Transverse colon (tissue), 4 donors: ENCODE measurements at regions of chr6 and their contacts with region 1.

Region 1: GRCh38 chr6:138001750-138002349 is 105.4 kb downstream of the PERP start:
- DNase-seq: peak; percentile 74
- H3K4me3 ChIP-seq: no peak overlapping the region
- H3K27ac ChIP-seq: no peak overlapping the region
- H3K4me1 ChIP-seq: peaks cover 0 to 3% (median 0%) of the 10 kb centered on the region in 4 donors
- H3K27me3 ChIP-seq: no peaks in the 10 kb centered on the region
- CTCF ChIP-seq: peak; percentile 83 to 93 (median 88)
- EP300 ChIP-seq: no peak
- POLR2A ChIP-seq: no peak

Region 2: DNA sequence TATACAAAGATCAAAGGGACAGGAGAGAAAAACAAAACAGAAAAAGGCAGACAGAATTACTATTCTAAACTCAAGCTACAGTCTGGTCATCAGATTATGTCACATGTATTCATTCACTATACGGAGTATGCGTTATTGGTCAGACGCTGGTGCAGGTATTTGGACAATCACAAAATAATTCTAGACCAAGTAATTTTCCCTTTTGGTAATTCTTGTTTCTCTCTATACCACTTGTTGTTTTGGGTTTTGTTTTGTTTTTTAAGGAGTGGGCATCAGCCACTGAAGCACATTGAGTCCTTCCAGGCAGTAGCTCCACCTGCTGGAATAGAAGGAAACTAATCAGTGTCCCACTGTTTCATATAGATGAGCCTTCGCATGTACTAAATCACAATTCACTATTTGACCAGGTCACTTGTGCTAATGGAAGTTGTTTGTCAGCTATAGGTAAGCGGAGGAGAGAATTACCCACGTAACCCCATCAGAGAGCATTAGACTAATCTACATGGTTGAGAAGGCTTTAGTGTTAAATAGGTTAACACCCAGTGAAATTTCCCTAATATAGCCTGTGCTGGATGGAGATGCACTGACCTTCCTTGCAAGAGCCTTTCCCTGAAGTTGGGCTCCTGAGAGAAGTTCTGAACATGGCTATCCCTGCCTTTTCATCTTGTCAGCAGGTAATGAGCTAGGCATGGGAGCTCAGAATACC is 56.9 kb before region 1 on chr6:
- in situ Hi-C with region 1: no loop called
- intact Hi-C with region 1: no loop called
- DNase-seq: no peak
- H3K4me3 ChIP-seq: no peak overlapping the region
- H3K27ac ChIP-seq: no peak overlapping the region
- H3K4me1 ChIP-seq: no peaks in the 10 kb centered on the region
- H3K27me3 ChIP-seq: no peaks in the 10 kb centered on the region
- CTCF ChIP-seq: peak; percentile 64 to 77 (median 73)
- EP300 ChIP-seq: no peak
- POLR2A ChIP-seq: no peak

Region 3: DNA sequence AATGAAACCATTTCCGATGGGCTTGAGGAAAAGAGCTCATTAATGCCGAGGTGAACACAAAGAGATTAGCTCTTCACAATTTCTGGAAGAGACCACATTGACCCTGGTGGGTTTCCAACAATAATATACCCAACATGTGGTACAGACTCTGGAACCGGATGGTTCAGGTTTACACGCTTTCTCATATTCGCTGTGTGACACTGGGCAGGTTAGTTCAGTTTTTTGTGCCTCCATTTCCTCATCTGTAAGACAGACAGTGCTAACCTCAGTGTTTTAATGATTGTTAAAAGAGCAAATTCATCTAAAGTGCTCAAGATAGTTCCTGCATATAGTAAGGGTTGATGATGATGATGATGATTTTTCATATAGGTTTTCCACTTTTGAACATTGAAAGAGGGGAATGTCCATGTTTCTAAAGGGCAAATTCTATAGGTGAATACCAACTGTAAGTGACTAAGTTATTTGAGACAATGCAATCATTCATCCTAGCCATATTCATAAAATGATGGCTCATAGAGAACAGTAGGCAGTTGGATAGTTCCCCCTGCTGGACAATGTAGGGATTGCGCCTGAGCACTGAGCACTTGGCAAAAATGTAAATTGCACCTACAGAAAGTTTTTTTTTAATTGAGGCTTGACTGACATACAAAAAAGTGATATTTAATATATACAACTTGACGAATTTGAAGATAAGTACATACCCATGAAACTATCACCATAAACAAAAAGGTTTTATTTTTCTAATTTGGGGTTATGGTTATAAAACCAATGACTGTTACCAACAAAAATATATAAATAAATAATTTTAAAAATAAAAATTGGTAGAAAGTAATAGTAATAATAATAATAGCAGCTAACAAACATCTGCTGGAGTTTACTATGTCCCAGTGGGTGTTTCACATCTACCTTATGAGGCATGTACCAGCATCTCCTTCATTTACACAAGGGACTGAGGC is 107.5 kb after region 1 on chr6:
- in situ Hi-C with region 1: loop called (anchors 5 to 10 kb)
- intact Hi-C with region 1: loop called (anchors 2 kb)
- DNase-seq: peak; percentile 87
- H3K4me3 ChIP-seq: no peak overlapping the region
- H3K27ac ChIP-seq: peak overlapping the region in 3 of 4 donors; percentile 26 to 49 (median 37)
- H3K4me1 ChIP-seq: peaks cover 0 to 35% (median 10%) of the 10 kb centered on the region in 4 donors
- H3K27me3 ChIP-seq: peaks cover 20% of the 10 kb centered on the region
- CTCF ChIP-seq: peak; percentile 97 to 99 (median 98)
- EP300 ChIP-seq: no peak
- POLR2A ChIP-seq: no peak

Region 4: GRCh38 chr6:138231381-138231897 is 229.6 kb after region 1 on chr6:
- in situ Hi-C with region 1: no loop called
- intact Hi-C with region 1: no loop called
- DNase-seq: no peak
- H3K4me3 ChIP-seq: no peak overlapping the region
- H3K27ac ChIP-seq: peak overlapping the region in 3 of 4 donors; percentile 49 to 74 (median 53)
- H3K4me1 ChIP-seq: peaks cover 0 to 18% (median 14%) of the 10 kb centered on the region in 4 donors
- H3K27me3 ChIP-seq: no peaks in the 10 kb centered on the region
- CTCF ChIP-seq: no peak
- EP300 ChIP-seq: no peak
- POLR2A ChIP-seq: no peak

Region 5: GRCh38 chr6:138287144-138287955 is 285.5 kb after region 1 on chr6:
- in situ Hi-C with region 1: loop called in 1 of 4 experiments (anchors 25 kb)
- intact Hi-C with region 1: no loop called
- DNase-seq: peak; percentile 67
- H3K4me3 ChIP-seq: no peak overlapping the region
- H3K27ac ChIP-seq: no peak overlapping the region
- H3K4me1 ChIP-seq: no peaks in the 10 kb centered on the region
- H3K27me3 ChIP-seq: no peaks in the 10 kb centered on the region
- CTCF ChIP-seq: peak; percentile 47 to 77 (median 63)
- EP300 ChIP-seq: no peak
- POLR2A ChIP-seq: no peak

Region 6: DNA sequence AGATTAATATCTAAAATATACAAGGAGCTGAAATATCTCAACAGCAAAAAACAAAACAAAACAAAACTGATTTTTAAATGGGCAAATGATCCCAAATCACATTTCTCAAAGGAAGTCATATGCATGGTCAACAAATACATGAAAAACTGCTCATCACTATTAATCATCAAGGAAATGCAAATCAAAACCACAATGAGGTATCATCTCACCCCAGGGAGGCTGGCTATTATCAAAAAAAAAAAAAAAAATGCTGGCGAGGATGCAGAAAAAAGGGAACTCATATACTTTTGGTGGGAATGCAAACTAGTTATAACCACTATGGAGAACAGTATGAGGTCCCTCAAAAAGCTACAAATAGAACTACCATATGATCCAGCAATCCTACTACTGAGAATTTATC is 951.6 kb after region 1 on chr6:
- in situ Hi-C with region 1: no loop called
- intact Hi-C with region 1: no loop called
- DNase-seq: no peak
- H3K4me3 ChIP-seq: no peak overlapping the region
- H3K27ac ChIP-seq: no peak overlapping the region
- H3K4me1 ChIP-seq: peaks cover 10 to 49% (median 23%) of the 10 kb centered on the region in 4 donors
- H3K27me3 ChIP-seq: no peaks in the 10 kb centered on the region
- CTCF ChIP-seq: no peak
- EP300 ChIP-seq: no peak
- POLR2A ChIP-seq: no peak